ENCODE measurements at regions of chr20 and their contacts with region 1.

Region 1: GRCh38 chr20:61874501-61875026 is 191.1 kb downstream of the TAF4 start:
- DNase-seq: no peak

Region 2: DNA sequence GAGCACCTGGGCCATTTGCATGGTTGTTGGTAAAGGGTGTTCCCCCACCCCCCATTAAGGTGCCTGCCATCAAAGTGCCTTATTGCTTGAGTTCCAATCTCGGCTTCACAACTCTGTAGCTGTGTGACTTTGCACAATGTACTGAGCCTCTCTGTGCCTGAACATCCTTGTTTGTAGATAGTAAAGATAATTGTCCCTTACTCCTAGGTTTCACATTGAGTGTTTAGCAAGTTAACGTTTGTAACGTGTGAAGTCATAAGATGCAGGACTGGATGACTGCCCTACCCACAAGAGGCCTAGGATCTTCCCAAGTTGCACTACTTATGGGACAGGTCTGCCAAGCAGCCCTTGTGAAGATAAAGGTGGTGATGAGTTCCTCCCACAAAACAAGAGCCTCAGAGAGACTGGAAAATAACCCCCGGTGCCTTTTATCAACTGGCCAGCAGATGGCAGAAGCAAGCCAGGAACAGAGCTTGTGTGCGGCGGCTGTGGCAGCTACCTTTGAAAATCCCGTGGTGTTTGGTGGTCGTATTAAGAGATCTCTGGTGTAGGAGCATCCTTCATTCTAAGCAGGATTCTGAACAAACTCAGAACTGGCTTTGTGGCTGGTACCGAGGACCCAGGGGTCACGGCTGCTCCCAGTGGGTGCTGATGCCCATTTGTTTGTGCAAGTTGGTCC is 1817.3 kb before region 1 on chr20:
- intact Hi-C with region 1: loop called (anchors 5 kb)
- DNase-seq: peak; percentile 85

Region 3: GRCh38 chr20:61608041-61608835 is 266.3 kb before region 1 on chr20:
- intact Hi-C with region 1: no loop called
- DNase-seq: no peak

Region 4: GRCh38 chr20:61803915-61804804 is 70.4 kb before region 1 on chr20:
- intact Hi-C with region 1: no loop called
- DNase-seq: no peak

Region 5: GRCh38 chr20:61925555-61926252 is 51.1 kb after region 1 on chr20:
- intact Hi-C with region 1: no loop called
- DNase-seq: no peak

Region 6: GRCh38 chr20:62020935-62021701 is 146.6 kb after region 1 on chr20:
- intact Hi-C with region 1: no loop called
- DNase-seq: peak; percentile 81

Measured in cardiac septum (tissue), 1 donor.